Ascending aorta (tissue), 2 donors: ENCODE measurements at regions of chr9 and their contacts with region 1.

Region 1: DNA sequence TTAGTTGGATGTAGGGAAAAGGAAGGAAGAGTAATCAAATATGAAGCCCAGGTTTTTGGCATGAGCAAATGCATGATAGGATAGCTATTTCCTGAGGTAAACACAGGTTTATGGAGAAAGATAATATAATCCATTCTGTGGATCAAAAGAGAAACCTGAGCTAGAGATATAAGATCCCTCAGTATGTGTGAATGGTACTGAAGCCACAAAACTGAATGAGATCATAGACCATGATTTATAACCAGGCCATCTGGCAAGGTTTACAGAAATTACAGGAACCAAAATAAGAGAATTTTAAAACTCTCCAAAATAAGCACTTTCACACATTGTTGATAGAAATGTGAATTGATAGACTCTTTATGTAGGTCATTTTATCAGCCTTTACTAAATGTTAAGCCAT is 28.7 kb upstream of the ECM2 start:
- DNase-seq: no peak
- H3K4me3 ChIP-seq: no peak overlapping the region
- H3K27ac ChIP-seq: peak overlapping the region in 1 of 2 donors; percentile 24
- H3K4me1 ChIP-seq: peaks cover 3 to 8% of the 10 kb centered on the region in 2 donors
- H3K27me3 ChIP-seq: no peaks in the 10 kb centered on the region
- CTCF ChIP-seq: no peak

Region 2: GRCh38 chr9:92600462-92601261 is 36.2 kb after region 1 on chr9:
- intact Hi-C with region 1: loop called (anchors 5 kb)
- DNase-seq: no peak
- H3K4me3 ChIP-seq: peak overlapping the region in 1 of 2 donors; percentile 9
- H3K27ac ChIP-seq: peak overlapping the region; percentile 83 to 85
- H3K4me1 ChIP-seq: peaks cover 7 to 44% of the 10 kb centered on the region in 2 donors
- H3K27me3 ChIP-seq: no peaks in the 10 kb centered on the region
- CTCF ChIP-seq: no peak

Region 3: GRCh38 chr9:92954049-92954861 is 389.8 kb after region 1 on chr9:
- intact Hi-C with region 1: no loop called
- DNase-seq: peak in 1 of 2 donors; percentile 56
- H3K4me3 ChIP-seq: no peak overlapping the region
- H3K27ac ChIP-seq: no peak overlapping the region
- H3K4me1 ChIP-seq: no peaks in the 10 kb centered on the region
- H3K27me3 ChIP-seq: no peaks in the 10 kb centered on the region
- CTCF ChIP-seq: no peak